ENCODE measurements at regions of chr9 and their contacts with region 1.

Region 1: DNA sequence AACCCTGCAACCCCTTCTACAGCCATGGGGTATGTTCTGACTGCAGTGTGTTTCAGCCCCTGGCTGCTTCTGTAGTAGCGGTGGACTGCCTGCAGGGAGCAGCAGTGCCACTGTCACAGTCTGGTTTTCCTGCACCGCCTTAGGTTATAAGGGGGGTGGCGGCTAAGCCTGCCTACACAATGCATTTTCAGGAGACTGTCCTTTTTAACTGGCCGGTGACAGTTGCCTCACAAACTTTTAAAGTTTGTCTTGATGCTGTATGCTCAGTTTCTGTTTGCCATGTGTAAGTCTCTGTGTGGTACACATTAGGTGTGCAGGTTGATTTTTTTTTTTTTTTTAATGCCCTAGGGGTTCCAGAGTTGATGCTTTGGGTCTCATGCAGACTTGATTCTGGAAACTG is 53.0 kb downstream of the NUP214 start:
- DNase-seq: peak; percentile 23
- ATAC-seq: peak; percentile 99
- H3K4me3 ChIP-seq: no peak overlapping the region
- H3K27ac ChIP-seq: no peak overlapping the region
- H3K4me1 ChIP-seq: peaks cover 13% of the 10 kb centered on the region
- H3K27me3 ChIP-seq: no peaks in the 10 kb centered on the region
- CTCF ChIP-seq: peak; percentile 93 to 98 (median 96); a peak in 5 of 6 replicates
- EP300 ChIP-seq: no peak
- POLR2A ChIP-seq: no peak
- RAD21 ChIP-seq: peak; percentile 83

Region 2: GRCh38 chr9:130895481-130896232 is 282.7 kb before region 1 on chr9:
- CTCF ChIA-PET with region 1: no interaction called
- POLR2A ChIA-PET with region 1: no interaction called
- RAD21 ChIA-PET with region 1: no interaction called
- SMC1A ChIA-PET with region 1: no interaction called
- in situ Hi-C with region 1: no loop called
- intact Hi-C with region 1: no loop called
- DNase-seq: no peak
- ATAC-seq: no peak; the same call in 2 of the 3 replicates
- H3K4me3 ChIP-seq: no peak overlapping the region
- H3K27ac ChIP-seq: no peak overlapping the region
- H3K4me1 ChIP-seq: no peaks in the 10 kb centered on the region
- H3K27me3 ChIP-seq: no peaks in the 10 kb centered on the region
- CTCF ChIP-seq: no peak
- EP300 ChIP-seq: no peak
- POLR2A ChIP-seq: no peak
- RAD21 ChIP-seq: no peak

Region 3: GRCh38 chr9:130986356-130986965 is 191.9 kb before region 1 on chr9:
- CTCF ChIA-PET with region 1: no interaction called
- POLR2A ChIA-PET with region 1: no interaction called
- RAD21 ChIA-PET with region 1: no interaction called
- SMC1A ChIA-PET with region 1: no interaction called
- in situ Hi-C with region 1: no loop called
- intact Hi-C with region 1: no loop called
- DNase-seq: no peak
- ATAC-seq: no peak
- H3K4me3 ChIP-seq: no peak overlapping the region
- H3K27ac ChIP-seq: no peak overlapping the region
- H3K4me1 ChIP-seq: no peaks in the 10 kb centered on the region
- H3K27me3 ChIP-seq: no peaks in the 10 kb centered on the region; a peak in 1 of 4 replicates
- CTCF ChIP-seq: no peak
- EP300 ChIP-seq: no peak
- POLR2A ChIP-seq: no peak
- RAD21 ChIP-seq: no peak

Region 4: DNA sequence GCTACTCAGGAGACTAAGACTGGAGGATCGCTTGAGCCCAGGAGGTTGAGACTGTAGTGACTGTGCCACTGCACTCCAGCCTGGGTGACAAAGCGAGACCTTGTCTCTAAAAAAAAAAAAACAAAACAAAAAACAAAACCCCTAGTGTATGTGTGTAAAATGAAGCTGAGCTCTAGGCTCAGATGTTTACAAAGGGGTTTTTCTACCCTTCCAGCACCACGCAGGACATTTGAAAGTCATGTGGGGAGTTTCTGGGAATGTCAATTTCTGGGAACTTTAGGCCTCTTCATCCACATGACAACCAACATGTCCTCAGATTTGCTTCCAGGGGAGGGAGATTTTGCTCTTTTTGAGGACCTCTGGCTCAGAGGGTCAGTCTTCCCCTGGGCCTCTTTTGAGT is 124.5 kb before region 1 on chr9:
- CTCF ChIA-PET with region 1: interaction called, 12 read pairs
- POLR2A ChIA-PET with region 1: no interaction called
- RAD21 ChIA-PET with region 1: interaction called, 8 read pairs
- SMC1A ChIA-PET with region 1: interaction called, 4 read pairs
- in situ Hi-C with region 1: no loop called
- intact Hi-C with region 1: no loop called
- DNase-seq: no peak
- ATAC-seq: no peak
- H3K4me3 ChIP-seq: no peak overlapping the region
- H3K27ac ChIP-seq: no peak overlapping the region
- H3K4me1 ChIP-seq: no peaks in the 10 kb centered on the region
- H3K27me3 ChIP-seq: no peaks in the 10 kb centered on the region
- CTCF ChIP-seq: no peak
- EP300 ChIP-seq: no peak
- POLR2A ChIP-seq: no peak
- RAD21 ChIP-seq: no peak

Region 5: GRCh38 chr9:131203431-131204218 is 25.2 kb after region 1 on chr9:
- CTCF ChIA-PET with region 1: interaction called, 12 read pairs
- POLR2A ChIA-PET with region 1: no interaction called
- RAD21 ChIA-PET with region 1: no interaction called
- SMC1A ChIA-PET with region 1: interaction called, 4 read pairs
- in situ Hi-C with region 1: no loop called
- intact Hi-C with region 1: no loop called
- DNase-seq: no peak
- ATAC-seq: peak; percentile 66
- H3K4me3 ChIP-seq: no peak overlapping the region
- H3K27ac ChIP-seq: no peak overlapping the region
- H3K4me1 ChIP-seq: no peaks in the 10 kb centered on the region
- H3K27me3 ChIP-seq: no peaks in the 10 kb centered on the region
- CTCF ChIP-seq: peak; percentile 23 to 42 (median 38); a peak in 5 of 6 replicates
- EP300 ChIP-seq: no peak
- POLR2A ChIP-seq: no peak
- RAD21 ChIP-seq: peak; percentile 41

Region 6: DNA sequence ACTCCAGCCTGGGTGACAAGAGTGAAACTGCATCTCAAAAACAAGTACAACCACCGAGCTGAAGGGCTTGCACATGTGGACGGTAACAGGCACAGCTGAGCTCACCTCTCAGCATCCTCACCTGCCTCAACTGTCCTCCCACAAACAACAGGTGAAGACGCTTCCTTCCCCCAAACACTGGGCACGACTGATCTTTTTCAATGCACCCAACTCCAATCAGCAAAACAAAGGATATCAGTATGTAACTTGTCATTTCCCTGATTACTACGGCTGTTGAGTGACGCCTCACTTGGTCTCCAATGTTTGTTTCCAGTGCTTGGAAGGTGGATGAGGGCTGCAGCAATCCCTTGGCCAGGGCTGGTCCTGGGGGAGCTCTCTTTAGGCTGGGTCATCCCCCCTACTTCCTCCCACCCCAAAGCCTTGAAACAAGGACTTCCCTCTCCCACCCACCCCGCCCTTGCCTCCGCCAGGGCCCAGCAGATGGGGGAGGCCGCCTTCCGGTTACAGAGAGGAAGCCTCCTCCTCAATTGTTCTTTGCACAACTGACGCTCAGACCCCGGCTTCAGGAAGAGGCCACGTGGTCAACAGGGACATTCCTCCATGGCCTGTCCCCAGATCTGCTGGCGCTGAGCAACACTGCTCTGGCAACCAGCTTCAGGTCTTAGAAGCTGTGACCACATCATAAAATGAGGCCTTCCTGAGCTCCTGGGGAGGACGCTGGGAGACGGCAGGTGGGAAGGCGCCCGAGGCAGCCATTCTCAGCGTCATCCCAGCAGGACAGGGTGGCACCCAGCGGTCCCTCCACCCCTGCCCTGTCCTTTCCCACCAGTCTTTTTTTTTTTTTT is 92.0 kb after region 1 on chr9:
- CTCF ChIA-PET with region 1: interaction called, 63 read pairs
- POLR2A ChIA-PET with region 1: interaction called, 5 read pairs
- RAD21 ChIA-PET with region 1: interaction called, 35 read pairs
- SMC1A ChIA-PET with region 1: interaction called, 3 read pairs
- in situ Hi-C with region 1: no loop called
- intact Hi-C with region 1: loop called (anchors 1 kb)
- DNase-seq: no peak
- ATAC-seq: peak; percentile 31
- H3K4me3 ChIP-seq: peak overlapping the region; percentile 99
- H3K27ac ChIP-seq: peak overlapping the region; percentile 92
- H3K4me1 ChIP-seq: peaks cover 46% of the 10 kb centered on the region
- H3K27me3 ChIP-seq: no peaks in the 10 kb centered on the region
- CTCF ChIP-seq: no peak
- EP300 ChIP-seq: no peak
- POLR2A ChIP-seq: peak; percentile 46; the same call in 1 of the 2 replicates
- RAD21 ChIP-seq: no peak

Region 7: DNA sequence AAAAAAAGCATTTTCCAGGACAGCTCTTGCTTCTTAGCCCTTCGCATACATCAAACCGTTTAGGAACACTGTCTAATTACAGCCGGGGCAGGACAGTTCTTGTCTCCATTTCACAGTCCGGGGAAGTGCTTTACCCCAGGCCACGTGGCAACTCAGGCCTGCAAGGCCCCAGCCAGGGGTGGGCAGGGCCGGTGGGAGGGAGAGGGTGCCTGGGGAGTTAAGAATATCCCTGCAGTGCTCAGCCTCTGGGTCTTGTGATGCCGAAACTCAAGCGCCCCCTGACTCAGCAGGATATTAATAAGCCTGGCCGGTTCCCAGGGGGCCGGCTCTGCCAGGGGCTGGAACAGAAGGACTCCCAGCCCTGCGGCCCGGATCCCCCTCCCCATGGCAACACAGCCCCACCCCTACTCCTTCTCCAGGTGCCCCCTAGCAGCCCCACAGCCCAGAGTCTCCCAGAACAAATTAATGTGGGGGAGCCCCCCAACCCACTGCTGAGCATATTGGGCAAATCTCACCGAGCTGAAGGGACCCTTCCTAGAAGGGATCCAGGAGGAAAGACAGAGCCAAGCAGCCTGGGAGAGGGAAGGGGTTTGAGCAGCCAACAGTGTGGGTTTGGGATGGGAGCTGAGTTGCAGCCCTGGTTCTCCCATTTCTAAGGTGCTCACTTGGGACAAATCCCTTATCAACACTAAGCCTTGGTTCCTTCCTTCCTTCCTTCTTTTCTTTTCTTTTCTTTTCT is 156.4 kb after region 1 on chr9:
- CTCF ChIA-PET with region 1: interaction called, 171 read pairs
- POLR2A ChIA-PET with region 1: interaction called, 4 read pairs
- RAD21 ChIA-PET with region 1: interaction called, 74 read pairs
- SMC1A ChIA-PET with region 1: interaction called, 130 read pairs
- in situ Hi-C with region 1: loop called (anchors 5 kb)
- intact Hi-C with region 1: loop called (anchors 1 kb)
- DNase-seq: no peak
- ATAC-seq: no peak; the same call in 2 of the 3 replicates
- H3K4me3 ChIP-seq: no peak overlapping the region
- H3K27ac ChIP-seq: no peak overlapping the region
- H3K4me1 ChIP-seq: no peaks in the 10 kb centered on the region
- H3K27me3 ChIP-seq: no peaks in the 10 kb centered on the region
- CTCF ChIP-seq: no peak
- EP300 ChIP-seq: no peak
- POLR2A ChIP-seq: no peak
- RAD21 ChIP-seq: no peak

Measured in GM12878 (cell line).